ENCODE measurements at regions of chr11 and their contacts with region 1.

Region 1: GRCh38 chr11:66282468-66283386 is 4.8 kb downstream of the CNIH2 start:
- DNase-seq: peak; percentile 99
- ATAC-seq: peak; percentile 93

Region 2: DNA sequence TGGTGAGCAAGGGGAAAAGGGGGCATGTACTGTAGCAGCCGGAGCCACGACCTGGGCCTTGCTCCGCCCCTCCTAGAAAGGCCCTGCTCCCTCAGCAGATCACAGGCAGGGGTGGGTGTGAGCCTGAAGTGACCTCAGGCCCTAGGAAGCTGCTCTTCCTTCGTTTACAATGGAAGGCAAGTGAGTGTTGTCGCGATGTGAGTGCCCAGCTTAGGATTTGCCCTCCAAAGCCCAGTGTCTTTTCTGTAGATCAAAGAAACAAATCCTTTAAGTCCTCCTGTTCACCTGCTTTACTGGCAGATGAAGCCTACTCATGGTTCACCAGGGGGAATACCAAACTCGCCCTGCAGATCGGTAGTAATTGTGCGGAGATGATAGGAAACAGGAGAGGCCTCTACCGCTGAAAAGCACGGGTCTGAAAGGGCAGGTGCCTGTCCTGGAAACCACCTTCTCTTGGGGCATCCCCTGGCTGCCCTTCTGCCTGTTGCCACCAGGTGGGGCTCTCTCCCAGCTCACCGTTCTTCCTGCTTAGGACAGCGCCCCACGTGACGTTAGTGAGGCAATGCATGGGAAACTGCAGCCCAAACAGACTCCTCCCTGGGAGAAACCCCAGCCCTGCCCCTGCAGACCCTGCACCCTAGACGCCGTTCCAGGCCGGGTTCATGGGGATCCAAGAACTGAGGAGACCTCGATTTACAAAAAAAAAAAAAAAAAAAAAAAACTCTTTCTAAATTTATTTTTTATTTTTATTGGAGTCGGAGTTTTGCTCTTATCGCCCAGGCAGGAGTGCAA is 60.2 kb before region 1 on chr11:
- intact Hi-C with region 1: loop called (anchors 2 kb)
- DNase-seq: peak; percentile 92
- ATAC-seq: peak; percentile 96

Measured in Right ventricle myocardium superior (tissue), 1 donor.